ENCODE measurements at regions of chr2 and their contacts with region 1.

Region 1: DNA sequence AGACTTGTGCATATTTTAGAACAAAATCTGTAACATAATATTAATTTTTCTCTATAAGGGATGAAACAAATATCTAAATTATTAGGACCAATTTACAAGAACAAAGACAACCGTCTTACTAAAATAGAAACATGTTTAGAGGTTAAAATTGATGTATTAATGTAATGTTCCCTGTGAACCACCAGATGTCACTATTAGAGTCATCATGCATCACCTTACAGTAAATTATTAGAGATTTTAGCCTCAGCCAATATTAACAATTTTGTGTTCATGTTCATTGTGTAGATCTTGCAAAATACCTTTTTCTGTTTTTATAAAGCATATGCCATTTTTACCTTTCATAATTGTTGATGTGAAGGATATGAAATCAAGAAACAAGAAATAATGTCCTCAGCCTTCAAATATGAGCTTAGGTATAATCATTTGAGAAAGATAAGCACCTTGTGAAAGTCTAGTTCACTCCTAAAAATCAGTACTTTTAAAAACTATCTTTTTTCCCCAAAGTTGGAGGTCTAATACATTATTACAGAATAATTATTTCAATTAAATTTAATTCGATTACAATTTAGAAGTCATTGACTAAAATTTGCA is 344.3 kb upstream of the KCNH7 start:
- DNase-seq: no peak
- ATAC-seq: no peak
- H3K4me3 ChIP-seq: no peak overlapping the region
- H3K27ac ChIP-seq: no peak overlapping the region
- H3K4me1 ChIP-seq: no peaks in the 10 kb centered on the region
- H3K27me3 ChIP-seq: peaks cover 0 to 10% (median 0%) of the 10 kb centered on the region in 7 donors
- CTCF ChIP-seq: peak; percentile 24 to 73 (median 58)

Region 2: GRCh38 chr2:164430166-164430783 is 1247.4 kb after region 1 on chr2:
- intact Hi-C with region 1: loop called in 4 of 10 experiments (anchors 5 to 10 kb)
- DNase-seq: peak in 1 of 2 donors; percentile 11
- ATAC-seq: no peak
- H3K4me3 ChIP-seq: no peak overlapping the region
- H3K27ac ChIP-seq: no peak overlapping the region
- H3K4me1 ChIP-seq: no peaks in the 10 kb centered on the region
- H3K27me3 ChIP-seq: peaks cover 0 to 14% (median 0%) of the 10 kb centered on the region in 7 donors
- CTCF ChIP-seq: peak in 7 of 9 donors; percentile 55 to 73 (median 63)

Region 3: GRCh38 chr2:164479460-164479859 is 1296.6 kb after region 1 on chr2:
- intact Hi-C with region 1: loop called in 5 of 10 experiments (anchors 5 to 10 kb)
- DNase-seq: peak in 1 of 2 donors; percentile 19
- ATAC-seq: no peak
- H3K4me3 ChIP-seq: no peak overlapping the region
- H3K27ac ChIP-seq: no peak overlapping the region
- H3K4me1 ChIP-seq: no peaks in the 10 kb centered on the region
- H3K27me3 ChIP-seq: no peaks in the 10 kb centered on the region
- CTCF ChIP-seq: peak; percentile 24 to 66 (median 51)

Region 4: DNA sequence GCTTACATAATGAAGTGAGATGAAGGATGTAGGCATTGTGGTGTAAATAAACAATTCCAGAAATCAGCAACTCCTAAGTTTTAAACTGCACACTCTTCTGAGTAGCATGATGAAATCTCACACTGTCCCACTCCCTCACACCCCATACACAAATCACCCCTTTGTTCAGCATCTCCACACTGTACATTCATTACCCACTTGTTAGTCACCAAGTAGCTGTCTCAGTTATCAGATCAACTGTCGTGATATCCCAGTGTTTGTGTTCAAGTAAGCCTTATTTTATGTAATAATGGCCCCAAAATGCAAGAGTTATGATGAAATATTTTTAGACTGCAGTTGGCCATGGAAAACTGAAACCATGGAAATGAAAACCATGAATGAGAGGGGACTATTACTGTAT is 1302.7 kb after region 1 on chr2:
- intact Hi-C with region 1: loop called in 4 of 10 experiments (anchors 5 to 10 kb)
- DNase-seq: no peak
- ATAC-seq: no peak
- H3K4me3 ChIP-seq: no peak overlapping the region
- H3K27ac ChIP-seq: no peak overlapping the region
- H3K4me1 ChIP-seq: no peaks in the 10 kb centered on the region
- H3K27me3 ChIP-seq: no peaks in the 10 kb centered on the region
- CTCF ChIP-seq: no peak

Region 5: DNA sequence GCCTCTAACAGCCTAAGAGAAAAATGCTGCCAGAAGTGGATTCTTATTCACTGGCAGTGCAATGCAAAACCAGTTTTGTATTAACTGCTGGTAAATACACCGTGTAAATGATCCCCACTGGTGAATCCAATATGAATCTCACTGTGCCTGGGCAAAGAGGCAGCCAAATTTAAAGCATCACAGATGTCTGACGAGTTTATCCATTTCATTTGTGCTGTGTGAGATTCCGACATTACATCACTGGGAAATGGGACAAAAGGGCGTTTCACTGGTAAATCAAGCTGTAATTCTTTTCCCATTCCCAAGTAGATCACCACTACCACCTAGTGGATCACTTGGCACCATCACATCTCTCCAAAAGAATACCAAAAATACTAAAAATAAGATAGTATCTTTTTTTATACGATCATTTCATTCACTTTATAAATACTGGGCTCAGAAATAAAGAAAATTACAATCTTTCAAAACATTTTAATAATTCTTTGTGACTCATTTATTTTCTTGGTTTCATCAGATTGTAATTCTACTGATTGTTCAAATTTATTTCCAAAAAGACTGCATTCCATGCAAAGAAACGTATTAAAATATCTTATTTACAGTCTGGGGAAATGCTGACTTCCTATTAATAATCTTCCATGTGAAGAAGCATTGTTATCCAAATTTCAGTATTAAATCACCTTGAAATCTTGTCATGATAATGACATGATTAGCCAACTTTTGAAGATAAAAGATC is 1312.8 kb after region 1 on chr2:
- intact Hi-C with region 1: loop called in 2 of 10 experiments (anchors 5 to 10 kb)
- DNase-seq: peak in 1 of 2 donors; percentile 11
- ATAC-seq: peak in 2 of 8 donors; percentile 31 to 34
- H3K4me3 ChIP-seq: no peak overlapping the region
- H3K27ac ChIP-seq: no peak overlapping the region
- H3K4me1 ChIP-seq: no peaks in the 10 kb centered on the region
- H3K27me3 ChIP-seq: no peaks in the 10 kb centered on the region
- CTCF ChIP-seq: peak; percentile 18 to 68 (median 54)

Region 6: DNA sequence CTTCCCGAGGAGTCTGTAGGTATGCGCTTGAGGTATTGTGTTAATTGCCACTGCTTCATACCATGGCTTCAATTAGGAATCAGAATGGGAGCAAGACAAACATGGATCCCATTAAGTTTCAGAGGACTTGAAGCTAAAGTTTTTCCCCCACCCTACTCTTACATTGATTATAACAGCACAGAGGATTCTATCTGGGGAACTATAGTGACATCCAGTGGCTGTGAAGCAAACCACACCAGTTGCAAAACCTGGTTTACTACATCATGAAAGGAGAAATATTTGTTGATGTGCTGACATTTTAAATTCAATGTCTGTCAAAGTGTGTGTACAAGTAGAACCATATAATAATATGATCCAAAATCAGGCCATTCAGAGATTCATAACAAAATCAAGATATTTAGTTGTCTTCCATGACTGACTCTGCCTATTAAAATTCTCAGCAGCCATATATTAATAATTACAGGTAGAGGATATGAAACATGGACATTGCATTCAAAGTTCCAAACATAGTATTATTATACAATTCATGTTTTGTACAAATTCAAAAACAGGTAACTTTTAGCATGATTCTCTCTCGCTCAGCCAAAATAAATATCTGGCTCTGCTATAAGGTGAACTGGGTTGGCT is 1355.5 kb after region 1 on chr2:
- intact Hi-C with region 1: loop called in 1 of 10 experiments (anchors 5 kb)
- DNase-seq: no peak
- ATAC-seq: peak in 3 of 8 donors; percentile 47 to 75 (median 56)
- H3K4me3 ChIP-seq: no peak overlapping the region
- H3K27ac ChIP-seq: no peak overlapping the region
- H3K4me1 ChIP-seq: peaks cover 0 to 5% (median 0%) of the 10 kb centered on the region in 9 donors
- H3K27me3 ChIP-seq: no peaks in the 10 kb centered on the region
- CTCF ChIP-seq: peak in 8 of 9 donors; percentile 24 to 74 (median 57)